ENCODE measurements at regions of chr7 and their contacts with region 1.

Region 1: GRCh38 chr7:106329971-106330733 is 45.4 kb upstream of the NAMPT start:
- DNase-seq: no peak
- H3K4me3 ChIP-seq: no peak overlapping the region
- H3K27ac ChIP-seq: peak overlapping the region in 1 of 2 donors; percentile 44
- H3K4me1 ChIP-seq: peaks cover 6 to 10% of the 10 kb centered on the region in 2 donors
- H3K27me3 ChIP-seq: no peaks in the 10 kb centered on the region
- CTCF ChIP-seq: no peak

Region 2: DNA sequence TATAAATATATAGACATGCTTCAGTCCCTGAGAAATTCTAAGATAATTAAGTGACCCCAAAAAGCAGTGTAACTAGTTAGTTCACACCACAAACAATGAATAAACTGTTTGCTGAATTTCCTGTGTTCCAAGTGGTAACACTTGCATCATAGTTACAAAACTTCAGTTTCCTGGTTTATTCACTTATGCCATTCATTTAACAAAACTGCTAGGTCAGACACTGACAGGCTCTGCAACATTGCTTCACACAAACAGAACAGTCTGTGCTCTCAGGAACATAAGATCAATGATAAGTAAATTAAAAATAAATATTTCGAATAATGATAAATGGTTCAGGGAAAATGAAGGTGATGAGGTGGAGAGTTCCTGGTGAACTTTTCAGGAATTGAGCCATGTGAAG is 87.9 kb after region 1 on chr7:
- intact Hi-C with region 1: loop called (anchors 5 kb)
- DNase-seq: peak in 1 of 2 donors; percentile 68
- H3K4me3 ChIP-seq: no peak overlapping the region
- H3K27ac ChIP-seq: peak overlapping the region in 1 of 2 donors; percentile 34
- H3K4me1 ChIP-seq: peaks cover 0 to 2% of the 10 kb centered on the region in 2 donors
- H3K27me3 ChIP-seq: no peaks in the 10 kb centered on the region
- CTCF ChIP-seq: no peak

Measured in ascending aorta (tissue), 2 donors.